H1 (cell line): ENCODE measurements at regions of chr16 and their contacts with region 1.

Region 1: DNA sequence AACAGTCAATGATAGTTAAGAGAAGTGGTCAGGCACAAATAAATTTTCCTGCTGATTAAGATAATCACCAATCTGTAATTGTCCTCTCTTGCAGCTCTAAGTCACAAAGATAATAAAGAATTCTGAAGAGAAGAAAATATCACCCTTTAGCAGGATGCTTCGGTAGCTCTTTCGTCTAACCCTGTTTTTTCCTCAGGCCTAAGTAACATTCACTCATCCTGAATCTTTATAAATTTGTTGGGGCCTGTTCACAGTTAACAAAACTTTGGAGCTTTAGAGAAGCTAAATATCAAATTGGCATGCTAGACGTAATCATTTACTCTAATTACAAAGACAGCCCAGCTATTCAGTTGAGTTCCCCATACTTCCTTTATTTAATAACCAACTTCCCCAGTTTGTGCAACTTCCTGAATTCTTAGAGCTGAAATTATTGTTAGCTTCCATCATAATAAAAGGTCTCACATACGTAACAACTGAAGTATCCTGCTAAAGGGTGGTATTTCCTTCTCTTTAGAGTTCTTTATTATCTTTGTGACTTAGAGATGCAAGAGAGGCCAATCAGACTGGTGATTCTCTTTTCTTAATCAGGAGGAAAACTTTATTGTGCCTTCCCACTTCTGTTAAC is 118.6 kb downstream of the TANGO6 start:
- DNase-seq: no peak
- H3K4me3 ChIP-seq: no peak overlapping the region
- H3K27ac ChIP-seq: no peak overlapping the region
- H3K4me1 ChIP-seq: peaks cover 0 to 8% (median 4%) of the 10 kb centered on the region in 4 experiments; a peak in 4 of 7 replicates
- H3K27me3 ChIP-seq: no peaks in the 10 kb centered on the region; a peak in 1 of 7 replicates
- CTCF ChIP-seq: no peak
- EP300 ChIP-seq: no peak
- POLR2A ChIP-seq: no peak
- RAD21 ChIP-seq: no peak

Region 2: GRCh38 chr16:68893710-68894705 is 67.9 kb before region 1 on chr16:
- CTCF ChIA-PET with region 1: no interaction called
- POLR2A ChIA-PET with region 1: no interaction called
- DNase-seq: peak in 1 of 2 experiments; percentile 56
- H3K4me3 ChIP-seq: no peak overlapping the region
- H3K27ac ChIP-seq: no peak overlapping the region
- H3K4me1 ChIP-seq: no peaks in the 10 kb centered on the region
- H3K27me3 ChIP-seq: no peaks in the 10 kb centered on the region
- CTCF ChIP-seq: no peak
- EP300 ChIP-seq: no peak
- POLR2A ChIP-seq: no peak
- RAD21 ChIP-seq: no peak

Region 3: GRCh38 chr16:68935008-68935407 is 26.9 kb before region 1 on chr16:
- CTCF ChIA-PET with region 1: no interaction called
- POLR2A ChIA-PET with region 1: no interaction called
- DNase-seq: no peak
- H3K4me3 ChIP-seq: no peak overlapping the region
- H3K27ac ChIP-seq: no peak overlapping the region
- H3K4me1 ChIP-seq: no peaks in the 10 kb centered on the region
- H3K27me3 ChIP-seq: no peaks in the 10 kb centered on the region
- CTCF ChIP-seq: no peak
- EP300 ChIP-seq: no peak
- POLR2A ChIP-seq: no peak
- RAD21 ChIP-seq: no peak

Region 4: GRCh38 chr16:68972720-68973119 is 10.8 kb after region 1 on chr16:
- CTCF ChIA-PET with region 1: interaction called, 16 read pairs
- POLR2A ChIA-PET with region 1: interaction called, 3 read pairs
- DNase-seq: peak; percentile 63 to 67
- H3K4me3 ChIP-seq: peak overlapping the region in 1 of 4 experiments; percentile 25; a peak in 3 of 8 replicates
- H3K27ac ChIP-seq: no peak overlapping the region
- H3K4me1 ChIP-seq: peaks cover 10 to 20% (median 11%) of the 10 kb centered on the region in 4 experiments
- H3K27me3 ChIP-seq: no peaks in the 10 kb centered on the region
- CTCF ChIP-seq: peak; percentile 48 to 63 (median 60)
- EP300 ChIP-seq: no peak
- POLR2A ChIP-seq: no peak
- RAD21 ChIP-seq: peak; percentile 47 to 49